Activated CD4-positive, alpha-beta memory T cell treated with anti-CD3 and anti-CD28 coated beads for 36 hours (primary cell): ENCODE measurements at regions of chr1 and their contacts with region 1.

Region 1: DNA sequence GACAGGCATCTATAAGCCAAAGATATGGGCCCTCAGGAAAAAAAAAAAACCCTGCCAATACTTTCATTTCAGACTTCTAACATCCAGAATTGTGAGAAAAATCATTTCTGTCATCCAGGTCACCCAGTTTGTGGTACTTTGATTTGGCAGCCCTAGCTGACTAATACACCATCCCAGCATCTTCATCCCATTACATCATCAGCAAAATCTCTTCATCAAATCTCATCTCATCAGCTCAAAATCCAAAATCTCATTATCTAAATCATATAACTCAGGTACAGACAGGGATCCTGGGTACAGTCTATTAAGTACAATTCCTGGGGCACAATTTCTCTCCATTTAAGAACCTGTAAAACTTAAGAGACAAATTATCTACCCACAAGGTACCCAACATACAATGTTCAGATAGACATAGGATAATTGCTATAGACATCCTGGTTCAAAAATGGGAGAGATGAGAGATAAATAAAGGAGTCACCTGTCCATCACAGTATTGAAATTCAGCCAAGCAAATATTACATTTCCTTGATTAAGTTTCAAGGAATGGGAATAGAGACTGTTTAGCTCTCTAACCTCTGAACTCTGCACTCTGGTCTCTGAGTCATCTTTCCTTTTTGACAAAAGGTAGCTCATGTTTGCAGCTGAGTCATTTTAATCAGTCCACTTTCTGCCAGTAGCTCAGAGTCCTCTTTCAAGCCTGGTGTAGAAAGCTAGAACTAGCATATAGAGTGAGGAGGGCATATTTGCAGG is 51.7 kb upstream of the GJA8 start:
- DNase-seq: no peak
- H3K4me3 Mint-ChIP-seq: no peak overlapping the region
- H3K27ac Mint-ChIP-seq: no peak overlapping the region
- H3K4me1 Mint-ChIP-seq: peaks cover 3% of the 10 kb centered on the region
- H3K27me3 Mint-ChIP-seq: peaks cover 2% of the 10 kb centered on the region

Region 2: GRCh38 chr1:147821883-147822282 is 29.1 kb before region 1 on chr1:
- CTCF ChIA-PET with region 1: no interaction called
- POLR2A ChIA-PET with region 1: no interaction called
- intact Hi-C with region 1: no loop called
- DNase-seq: no peak
- H3K4me3 Mint-ChIP-seq: no peak overlapping the region
- H3K27ac Mint-ChIP-seq: no peak overlapping the region
- H3K4me1 Mint-ChIP-seq: no peaks in the 10 kb centered on the region
- H3K27me3 Mint-ChIP-seq: no peaks in the 10 kb centered on the region

Region 3: GRCh38 chr1:147919896-147920295 is 69.0 kb after region 1 on chr1:
- CTCF ChIA-PET with region 1: no interaction called
- POLR2A ChIA-PET with region 1: no interaction called
- intact Hi-C with region 1: loop called (anchors 10 kb)
- DNase-seq: no peak
- H3K4me3 Mint-ChIP-seq: no peak overlapping the region
- H3K27ac Mint-ChIP-seq: no peak overlapping the region
- H3K4me1 Mint-ChIP-seq: peaks cover 5% of the 10 kb centered on the region
- H3K27me3 Mint-ChIP-seq: peaks cover 5% of the 10 kb centered on the region